ENCODE measurements at regions of chr11 and their contacts with region 1.

Region 1: DNA sequence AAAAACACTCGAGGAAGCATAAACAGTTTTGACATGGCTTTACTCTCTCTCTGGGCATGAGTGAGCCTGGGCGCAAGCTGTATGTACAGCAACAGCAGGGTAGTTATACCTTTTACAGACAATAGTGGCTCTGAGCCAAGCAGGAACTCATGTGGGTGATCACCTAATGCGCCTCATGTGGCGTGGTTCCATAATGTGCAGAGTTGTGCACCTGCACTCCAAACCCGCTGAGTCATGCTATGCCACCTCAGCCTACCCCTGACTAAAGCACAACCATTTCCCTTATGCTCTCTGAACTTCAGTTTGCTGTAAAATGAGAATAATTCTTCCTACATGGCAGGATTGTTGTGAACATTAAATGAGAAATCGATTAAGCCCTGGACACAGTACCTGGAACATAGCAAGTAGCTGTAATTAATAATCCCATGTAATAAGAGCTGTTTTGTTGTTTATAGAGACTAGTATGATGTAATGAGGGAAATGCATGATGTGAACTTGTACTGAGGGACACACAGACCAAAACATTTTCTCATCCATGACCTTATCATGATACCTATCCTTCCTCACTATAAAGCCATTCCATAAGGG is 71.6 kb downstream of the CCDC34 start:
- DNase-seq: peak; percentile 76
- H3K4me3 ChIP-seq: no peak overlapping the region
- H3K27ac ChIP-seq: peak overlapping the region; percentile 77
- H3K4me1 ChIP-seq: peaks cover 5% of the 10 kb centered on the region
- H3K27me3 ChIP-seq: no peaks in the 10 kb centered on the region
- CTCF ChIP-seq: no peak

Region 2: DNA sequence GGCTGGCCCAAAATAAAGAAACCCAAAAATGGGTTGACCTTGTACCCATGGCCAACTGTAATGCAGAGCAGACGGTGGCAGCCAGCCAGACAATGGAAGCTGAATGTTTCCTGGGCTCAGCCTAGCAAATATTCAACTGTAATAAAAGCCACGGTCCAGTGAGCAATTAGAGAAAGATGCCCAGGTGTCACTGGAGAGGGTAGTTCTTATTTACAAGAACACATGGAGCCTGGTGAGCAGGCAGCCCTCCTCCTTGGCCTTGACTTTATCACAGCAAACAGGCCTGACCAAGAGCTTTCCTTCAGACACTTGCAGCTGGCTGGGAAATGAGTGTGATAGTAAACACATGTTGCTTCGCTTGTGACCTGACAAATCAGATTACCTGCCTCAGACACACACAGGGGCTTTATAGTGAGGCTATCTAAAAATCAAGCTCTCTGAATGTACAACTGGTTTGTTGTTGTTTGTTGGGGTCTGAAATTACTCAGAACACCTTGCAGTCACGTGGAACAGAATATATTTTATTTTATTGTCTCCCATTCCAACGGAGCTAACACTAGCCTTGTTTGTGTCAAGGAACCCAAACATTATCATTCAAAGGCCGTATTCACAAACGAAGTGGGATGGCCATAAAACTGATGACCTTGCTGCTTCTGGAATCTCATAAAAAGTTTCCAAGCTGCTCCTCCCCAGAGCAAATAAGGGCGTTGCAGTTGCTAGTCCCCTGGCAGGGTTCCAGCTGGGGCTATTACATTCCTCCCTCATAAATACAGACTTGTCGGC is 89.8 kb before region 1 on chr11:
- intact Hi-C with region 1: loop called (anchors 5 kb)
- DNase-seq: peak; percentile 97
- H3K4me3 ChIP-seq: no peak overlapping the region
- H3K27ac ChIP-seq: peak overlapping the region; percentile 90
- H3K4me1 ChIP-seq: peaks cover 5% of the 10 kb centered on the region
- H3K27me3 ChIP-seq: no peaks in the 10 kb centered on the region
- CTCF ChIP-seq: no peak

Region 3: DNA sequence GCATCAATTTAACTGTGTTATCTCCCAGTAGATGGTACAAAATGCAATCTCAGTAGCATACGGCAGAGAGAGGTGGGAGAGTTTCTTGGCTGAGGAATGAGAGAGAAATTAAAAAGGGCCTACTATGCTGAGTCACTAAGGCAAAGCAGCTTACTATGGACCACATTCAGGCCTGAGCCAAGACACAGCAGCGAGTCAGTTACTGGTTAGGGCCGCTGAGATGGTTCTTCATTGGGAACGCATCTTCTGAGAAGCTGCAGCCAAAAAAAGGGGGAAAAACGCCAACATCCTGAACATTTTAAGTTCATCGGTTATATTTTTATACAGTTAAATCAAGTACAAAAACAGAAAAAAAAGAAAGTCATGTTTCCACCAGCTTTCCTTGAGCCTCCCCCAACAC is 470.0 kb after region 1 on chr11:
- intact Hi-C with region 1: no loop called
- DNase-seq: no peak
- H3K4me3 ChIP-seq: no peak overlapping the region
- H3K27ac ChIP-seq: no peak overlapping the region
- H3K4me1 ChIP-seq: no peaks in the 10 kb centered on the region
- H3K27me3 ChIP-seq: no peaks in the 10 kb centered on the region
- CTCF ChIP-seq: no peak